ENCODE measurements at regions of chr5 and their contacts with region 1.

Region 1: DNA sequence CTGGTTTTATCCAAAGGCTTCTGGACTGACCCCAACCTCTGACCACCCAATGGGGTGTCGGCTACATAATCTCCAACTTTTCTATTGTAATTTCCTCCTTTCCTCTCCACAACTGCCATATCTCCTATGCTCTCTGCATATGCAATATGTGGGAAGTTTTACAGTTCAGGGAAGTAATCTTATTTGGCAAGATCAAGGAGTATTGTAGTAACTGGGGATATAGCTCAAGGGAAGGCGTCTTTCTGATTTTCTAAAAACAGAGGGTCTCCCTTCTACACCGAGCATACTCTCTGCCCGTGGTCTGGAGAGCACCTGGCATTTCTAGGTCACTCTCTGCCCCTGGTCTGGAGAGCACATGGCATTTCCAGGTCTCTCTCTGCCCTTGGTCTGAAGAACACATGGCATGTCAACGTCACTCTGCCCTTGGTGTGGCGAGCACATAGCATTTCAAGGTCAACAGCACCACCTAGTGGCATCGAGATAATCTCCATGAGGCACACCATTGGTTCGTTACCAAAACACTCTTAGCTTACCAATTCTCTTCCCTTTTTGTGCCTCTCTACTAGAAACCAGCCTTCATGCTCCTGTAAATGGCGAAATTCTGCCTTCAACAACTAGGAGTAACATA is 616.4 kb upstream of the NUDT12 start:
- DNase-seq: peak; percentile 36 to 63
- H3K4me3 ChIP-seq: peak overlapping the region in 1 of 4 experiments; percentile 14; a peak in 1 of 8 replicates
- H3K27ac ChIP-seq: no peak overlapping the region
- H3K4me1 ChIP-seq: no peaks in the 10 kb centered on the region
- H3K27me3 ChIP-seq: no peaks in the 10 kb centered on the region
- CTCF ChIP-seq: peak; percentile 54 to 85 (median 61)
- EP300 ChIP-seq: no peak
- POLR2A ChIP-seq: no peak
- RAD21 ChIP-seq: peak; percentile 92 to 93

Region 2: GRCh38 chr5:103582364-103582763 is 596.6 kb before region 1 on chr5:
- CTCF ChIA-PET with region 1: interaction called, 47 read pairs
- POLR2A ChIA-PET with region 1: no interaction called
- DNase-seq: no peak
- H3K4me3 ChIP-seq: no peak overlapping the region
- H3K27ac ChIP-seq: no peak overlapping the region
- H3K4me1 ChIP-seq: peaks cover 0 to 4% (median 0%) of the 10 kb centered on the region in 4 experiments; a peak in 2 of 7 replicates
- H3K27me3 ChIP-seq: no peaks in the 10 kb centered on the region
- CTCF ChIP-seq: peak in 2 of 3 experiments; percentile 52 to 54; a peak in 3 of 4 replicates
- EP300 ChIP-seq: no peak
- POLR2A ChIP-seq: no peak
- RAD21 ChIP-seq: peak; percentile 86 to 87

Region 3: GRCh38 chr5:104146652-104147051 is 32.3 kb before region 1 on chr5:
- CTCF ChIA-PET with region 1: no interaction called
- POLR2A ChIA-PET with region 1: no interaction called
- DNase-seq: no peak
- H3K4me3 ChIP-seq: no peak overlapping the region
- H3K27ac ChIP-seq: no peak overlapping the region
- H3K4me1 ChIP-seq: no peaks in the 10 kb centered on the region
- H3K27me3 ChIP-seq: no peaks in the 10 kb centered on the region
- CTCF ChIP-seq: no peak
- EP300 ChIP-seq: no peak
- POLR2A ChIP-seq: no peak
- RAD21 ChIP-seq: no peak

Region 4: DNA sequence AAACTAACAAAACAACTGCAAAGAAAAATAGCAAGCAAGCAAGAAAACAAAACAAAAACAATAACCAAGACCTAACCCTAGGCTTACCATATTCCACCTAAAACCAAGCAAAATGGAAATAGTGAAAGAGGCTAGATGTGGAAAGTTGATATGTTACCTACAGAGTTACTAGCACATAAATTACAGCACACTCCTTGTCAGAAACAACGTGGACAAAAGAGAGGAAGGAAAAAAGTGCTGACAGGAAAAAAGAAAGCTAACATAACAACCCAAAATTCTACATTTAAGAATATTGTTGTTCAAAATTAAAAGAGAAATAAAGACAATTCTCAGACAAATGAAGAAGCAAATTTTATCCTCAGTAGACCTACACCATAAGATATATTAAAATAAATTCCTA is 196.4 kb after region 1 on chr5:
- CTCF ChIA-PET with region 1: no interaction called
- POLR2A ChIA-PET with region 1: no interaction called
- DNase-seq: no peak
- H3K4me3 ChIP-seq: no peak overlapping the region
- H3K27ac ChIP-seq: no peak overlapping the region
- H3K4me1 ChIP-seq: no peaks in the 10 kb centered on the region
- H3K27me3 ChIP-seq: no peaks in the 10 kb centered on the region
- CTCF ChIP-seq: no peak
- EP300 ChIP-seq: no peak
- POLR2A ChIP-seq: no peak
- RAD21 ChIP-seq: no peak